B cell (primary cell): ENCODE measurements at regions of chr6 and their contacts with region 1.

Region 1: GRCh38 chr6:43059168-43060033 is at the starts of genes KLC4 and MRPL2:
- DNase-seq: peak; percentile 98
- ATAC-seq: peak; percentile 96
- H3K4me3 ChIP-seq: peak within 1 kb of the TSS; percentile 76 to 96 (median 89)
- H3K4me3 Mint-ChIP-seq: peak within 1 kb of the TSS; percentile 99
- H3K27ac ChIP-seq: peak within 1 kb of the TSS; percentile 76 to 86
- H3K27ac Mint-ChIP-seq: peak within 1 kb of the TSS; percentile 100
- H3K4me1 ChIP-seq: peaks cover 17 to 23% of the 10 kb centered on the region in 2 donors
- H3K4me1 Mint-ChIP-seq: peaks cover 38% of the 10 kb centered on the region
- H3K27me3 ChIP-seq: no peaks in the 10 kb centered on the region
- H3K27me3 Mint-ChIP-seq: no peaks in the 10 kb centered on the region
- CTCF ChIP-seq: no peak
- total RNA-seq, gene KLC4: 52.7 and 61.9 TPM in 2 replicates
- total RNA-seq, gene MRPL2: 43.8 and 45.6 TPM in 2 replicates

Region 2: DNA sequence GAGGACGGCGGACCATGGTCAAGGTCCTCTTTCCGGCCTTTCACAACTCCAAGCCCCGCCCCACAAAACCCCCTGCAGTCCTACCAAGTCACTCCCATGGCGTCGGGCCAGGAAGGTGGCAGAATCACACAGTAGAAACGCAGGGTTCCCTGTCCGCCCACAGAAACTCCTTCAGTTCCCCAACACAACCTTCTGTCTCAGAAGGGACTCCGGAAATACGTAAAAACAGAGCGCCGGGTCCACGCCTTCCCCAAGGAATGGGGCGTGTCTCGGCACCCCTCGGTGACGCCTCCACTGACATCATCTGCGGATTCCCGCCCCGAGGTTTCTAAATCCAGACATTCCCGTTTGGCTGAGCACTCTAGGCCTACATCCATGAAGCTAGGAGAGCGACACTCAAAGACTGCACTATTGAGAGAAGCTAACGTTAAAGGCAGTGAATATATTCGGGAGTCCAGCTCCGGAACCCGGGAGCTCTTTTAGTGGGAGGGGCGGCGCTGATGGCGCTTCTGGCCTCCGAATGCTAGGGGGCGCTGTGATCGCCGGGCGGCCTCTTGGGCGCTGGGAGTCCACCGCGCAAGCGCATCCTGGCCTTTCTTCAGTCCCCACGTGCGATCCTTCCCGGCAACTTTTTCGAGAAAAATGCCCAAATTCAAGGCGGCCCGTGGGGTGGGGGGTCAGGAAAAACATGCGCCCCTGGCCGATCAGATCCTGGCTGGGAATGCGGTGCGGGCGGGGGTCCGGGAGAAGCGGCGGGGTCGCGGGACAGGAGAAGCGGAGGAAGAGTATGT is 1138.3 kb before region 1 on chr6 and contains the starts of genes BYSL and MED20:
- CTCF ChIA-PET with region 1: no interaction called
- POLR2A ChIA-PET with region 1: no interaction called
- intact Hi-C with region 1: loop called (anchors 2 kb)
- DNase-seq: peak; percentile 98
- ATAC-seq: peak; percentile 93
- H3K4me3 ChIP-seq: peak within 1 kb of the TSS; percentile 67 to 99 (median 97)
- H3K4me3 Mint-ChIP-seq: peak within 1 kb of the TSS; percentile 98
- H3K27ac ChIP-seq: peak within 1 kb of the TSS; percentile 91 to 96
- H3K27ac Mint-ChIP-seq: peak within 1 kb of the TSS; percentile 98
- H3K4me1 ChIP-seq: peaks cover 26 to 29% of the 10 kb centered on the region in 2 donors
- H3K4me1 Mint-ChIP-seq: peaks cover 47% of the 10 kb centered on the region
- H3K27me3 ChIP-seq: no peaks in the 10 kb centered on the region
- H3K27me3 Mint-ChIP-seq: no peaks in the 10 kb centered on the region
- CTCF ChIP-seq: peak; percentile 93
- total RNA-seq, gene BYSL: 10.5 and 11.1 TPM in 2 replicates
- total RNA-seq, gene MED20: 18.2 and 24.2 TPM in 2 replicates

Region 3: DNA sequence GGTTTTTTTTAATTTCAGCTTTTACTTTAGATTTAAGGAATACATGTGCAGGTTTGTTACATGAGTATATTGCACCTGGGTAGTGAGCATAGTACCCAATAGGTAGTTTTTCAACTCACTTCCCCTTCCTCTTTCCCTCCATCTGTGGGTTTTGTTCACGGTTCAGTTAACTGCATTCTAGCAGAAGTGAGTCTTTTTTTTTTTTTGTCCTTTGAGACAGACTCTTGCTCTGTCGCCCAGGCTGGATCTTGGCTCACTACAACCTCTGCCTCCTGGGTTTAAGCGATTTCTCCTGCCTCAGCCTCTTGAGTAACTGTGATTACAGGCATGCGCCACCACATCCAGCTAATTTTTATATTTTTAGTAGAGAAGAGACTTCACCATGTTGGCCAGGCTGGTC is 486.9 kb before region 1 on chr6:
- CTCF ChIA-PET with region 1: no interaction called
- POLR2A ChIA-PET with region 1: no interaction called
- intact Hi-C with region 1: loop called (anchors 10 kb)
- DNase-seq: peak; percentile 88
- ATAC-seq: peak; percentile 98
- H3K4me3 ChIP-seq: peak overlapping the region in 1 of 5 experiments; percentile 11
- H3K4me3 Mint-ChIP-seq: peak overlapping the region; percentile 3
- H3K27ac ChIP-seq: peak overlapping the region; percentile 51 to 68
- H3K27ac Mint-ChIP-seq: peak overlapping the region; percentile 75
- H3K4me1 ChIP-seq: peaks cover 28 to 31% of the 10 kb centered on the region in 2 donors
- H3K4me1 Mint-ChIP-seq: peaks cover 36% of the 10 kb centered on the region
- H3K27me3 ChIP-seq: no peaks in the 10 kb centered on the region
- H3K27me3 Mint-ChIP-seq: no peaks in the 10 kb centered on the region
- CTCF ChIP-seq: no peak

Region 4: DNA sequence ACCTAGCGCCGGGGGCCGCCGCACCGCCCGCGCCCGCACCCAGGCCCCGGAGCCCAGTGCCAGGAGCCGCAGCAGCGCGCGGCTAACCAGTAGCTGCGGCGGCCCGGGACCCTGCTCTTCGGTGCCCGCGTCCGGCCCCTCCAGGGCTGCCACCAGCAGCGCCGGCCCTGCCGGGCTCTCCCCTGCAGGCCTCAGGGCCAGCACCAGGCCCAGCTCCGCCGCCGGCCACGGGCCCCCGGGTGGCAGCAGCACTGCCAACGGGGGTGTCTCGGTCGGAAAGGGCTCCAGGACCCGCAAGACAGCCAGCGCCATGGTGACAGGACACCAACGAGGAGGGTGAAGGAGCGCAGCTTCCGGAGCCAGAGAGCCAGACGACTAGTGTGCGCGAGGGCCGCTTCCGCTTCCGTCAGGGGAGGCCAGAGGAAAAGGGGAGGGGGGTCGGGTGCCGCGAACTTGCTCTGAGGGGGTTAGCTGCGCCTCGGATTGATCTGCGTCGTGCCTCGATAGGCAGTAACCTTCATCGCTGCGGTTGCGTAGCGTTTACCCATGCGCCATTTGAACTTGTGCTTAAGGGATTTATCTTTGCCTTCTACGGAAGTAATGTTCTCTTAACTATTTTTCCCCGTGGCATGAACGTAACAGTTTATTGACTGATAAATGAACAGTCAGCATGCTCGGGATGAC is 80.4 kb before region 1 on chr6 and contains the start of gene PEX6:
- CTCF ChIA-PET with region 1: no interaction called
- POLR2A ChIA-PET with region 1: interaction called, 5 read pairs
- intact Hi-C with region 1: loop called (anchors 2 kb)
- DNase-seq: peak; percentile 95
- ATAC-seq: peak; percentile 94
- H3K4me3 ChIP-seq: peak within 1 kb of the TSS; percentile 71 to 88 (median 80)
- H3K4me3 Mint-ChIP-seq: peak within 1 kb of the TSS; percentile 98
- H3K27ac ChIP-seq: peak within 1 kb of the TSS; percentile 73 to 85
- H3K27ac Mint-ChIP-seq: peak within 1 kb of the TSS; percentile 98
- H3K4me1 ChIP-seq: peaks cover 19 to 30% of the 10 kb centered on the region in 2 donors
- H3K4me1 Mint-ChIP-seq: peaks cover 38% of the 10 kb centered on the region
- H3K27me3 ChIP-seq: no peaks in the 10 kb centered on the region
- H3K27me3 Mint-ChIP-seq: no peaks in the 10 kb centered on the region
- CTCF ChIP-seq: no peak
- total RNA-seq, gene PEX6: 16.6 and 17.1 TPM in 2 replicates